A549 (cell line): ENCODE measurements at regions of chr19 and their contacts with region 1.

Region 1: GRCh38 chr19:10251792-10252694 is at the start of gene MRPL4:
- DNase-seq: peak; percentile 91 to 97
- ATAC-seq: peak; percentile 96 to 97
- H3K4me3 ChIP-seq: peak within 1 kb of the TSS; percentile 86
- H3K27ac ChIP-seq: peak within 1 kb of the TSS; percentile 95 to 98
- H3K4me1 ChIP-seq: no peaks in the 10 kb centered on the region
- CTCF ChIP-seq: no peak
- EP300 ChIP-seq: no peak
- POLR2A ChIP-seq: peak; percentile 52
- RAD21 ChIP-seq: no peak
- polyA plus RNA-seq, gene MRPL4: 25.9 and 26.4 TPM in 2 replicates

Region 2: DNA sequence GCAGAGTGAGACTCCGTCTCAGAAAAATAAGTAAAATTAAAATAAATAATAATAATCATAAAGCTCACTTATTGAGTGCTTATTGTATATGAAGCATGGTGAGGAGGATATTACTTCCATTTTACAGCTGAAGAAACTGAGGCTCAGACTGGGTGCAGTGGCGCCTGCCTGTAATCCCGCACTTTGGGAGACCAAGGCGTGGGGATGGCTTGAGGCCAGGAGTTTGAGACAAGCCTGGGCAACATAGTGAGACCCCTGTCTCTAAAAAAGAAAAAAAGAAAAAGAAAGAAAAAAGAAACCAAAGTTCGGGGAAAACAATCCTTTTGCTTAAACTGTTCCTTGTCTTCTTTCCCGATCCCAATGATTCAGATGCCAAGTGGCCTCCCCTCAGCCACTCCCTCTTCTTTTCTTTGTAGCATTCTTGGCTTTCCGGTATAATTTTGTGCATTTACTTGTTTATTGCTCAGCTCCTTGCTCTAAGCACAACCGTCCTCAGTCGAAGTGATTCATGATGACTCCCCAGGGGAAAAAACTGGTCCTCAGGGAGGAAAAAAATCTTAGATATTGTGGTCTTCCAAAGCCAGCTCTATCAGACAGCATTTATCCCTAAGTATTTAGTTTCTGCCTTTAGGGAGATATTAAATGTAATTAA is 131.4 kb before region 1 on chr19:
- CTCF ChIA-PET with region 1: interaction called, 13 read pairs
- POLR2A ChIA-PET with region 1: no interaction called
- DNase-seq: no peak
- ATAC-seq: no peak
- H3K4me3 ChIP-seq: no peak overlapping the region
- H3K27ac ChIP-seq: peak overlapping the region in 1 of 2 experiments; percentile 36; a peak in 2 of 6 replicates
- H3K4me1 ChIP-seq: 0 out of 3 replicates have a peak, but pooled peaks cover 5% of the 10 kb centered on the region
- CTCF ChIP-seq: no peak
- EP300 ChIP-seq: no peak
- POLR2A ChIP-seq: no peak
- RAD21 ChIP-seq: no peak

Region 3: DNA sequence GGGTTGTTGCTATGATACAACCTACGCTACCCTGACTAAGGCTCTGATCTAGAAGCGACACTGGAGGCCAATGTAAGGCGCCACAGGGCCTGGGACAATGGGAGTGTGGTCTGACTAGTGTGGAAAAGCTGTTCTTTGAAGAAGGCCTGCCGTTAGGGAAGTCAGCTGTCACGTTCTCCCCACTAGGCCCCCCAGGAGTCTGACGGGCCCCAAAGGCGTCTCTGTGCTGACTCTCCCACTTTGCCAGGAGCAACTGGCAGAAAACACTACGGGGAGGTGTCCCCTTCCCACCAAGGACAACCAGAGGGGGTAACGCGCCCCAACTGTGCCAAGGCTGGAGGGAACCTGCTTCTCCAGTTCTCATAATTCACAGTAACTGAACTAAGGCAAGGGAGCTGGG is 107.0 kb before region 1 on chr19:
- CTCF ChIA-PET with region 1: no interaction called
- POLR2A ChIA-PET with region 1: no interaction called
- DNase-seq: no peak
- ATAC-seq: no peak
- H3K4me3 ChIP-seq: no peak overlapping the region
- H3K27ac ChIP-seq: no peak overlapping the region
- H3K4me1 ChIP-seq: no peaks in the 10 kb centered on the region
- CTCF ChIP-seq: no peak
- EP300 ChIP-seq: no peak
- POLR2A ChIP-seq: no peak
- RAD21 ChIP-seq: no peak

Region 4: GRCh38 chr19:10173257-10173926 is 78.7 kb before region 1 on chr19:
- CTCF ChIA-PET with region 1: no interaction called
- POLR2A ChIA-PET with region 1: no interaction called
- DNase-seq: peak in 1 of 2 experiments; percentile 37
- ATAC-seq: no peak
- H3K4me3 ChIP-seq: no peak overlapping the region
- H3K27ac ChIP-seq: no peak overlapping the region
- H3K4me1 ChIP-seq: 0 out of 3 replicates have a peak, but pooled peaks cover 7% of the 10 kb centered on the region
- CTCF ChIP-seq: no peak
- EP300 ChIP-seq: no peak
- POLR2A ChIP-seq: no peak
- RAD21 ChIP-seq: no peak

Region 5: DNA sequence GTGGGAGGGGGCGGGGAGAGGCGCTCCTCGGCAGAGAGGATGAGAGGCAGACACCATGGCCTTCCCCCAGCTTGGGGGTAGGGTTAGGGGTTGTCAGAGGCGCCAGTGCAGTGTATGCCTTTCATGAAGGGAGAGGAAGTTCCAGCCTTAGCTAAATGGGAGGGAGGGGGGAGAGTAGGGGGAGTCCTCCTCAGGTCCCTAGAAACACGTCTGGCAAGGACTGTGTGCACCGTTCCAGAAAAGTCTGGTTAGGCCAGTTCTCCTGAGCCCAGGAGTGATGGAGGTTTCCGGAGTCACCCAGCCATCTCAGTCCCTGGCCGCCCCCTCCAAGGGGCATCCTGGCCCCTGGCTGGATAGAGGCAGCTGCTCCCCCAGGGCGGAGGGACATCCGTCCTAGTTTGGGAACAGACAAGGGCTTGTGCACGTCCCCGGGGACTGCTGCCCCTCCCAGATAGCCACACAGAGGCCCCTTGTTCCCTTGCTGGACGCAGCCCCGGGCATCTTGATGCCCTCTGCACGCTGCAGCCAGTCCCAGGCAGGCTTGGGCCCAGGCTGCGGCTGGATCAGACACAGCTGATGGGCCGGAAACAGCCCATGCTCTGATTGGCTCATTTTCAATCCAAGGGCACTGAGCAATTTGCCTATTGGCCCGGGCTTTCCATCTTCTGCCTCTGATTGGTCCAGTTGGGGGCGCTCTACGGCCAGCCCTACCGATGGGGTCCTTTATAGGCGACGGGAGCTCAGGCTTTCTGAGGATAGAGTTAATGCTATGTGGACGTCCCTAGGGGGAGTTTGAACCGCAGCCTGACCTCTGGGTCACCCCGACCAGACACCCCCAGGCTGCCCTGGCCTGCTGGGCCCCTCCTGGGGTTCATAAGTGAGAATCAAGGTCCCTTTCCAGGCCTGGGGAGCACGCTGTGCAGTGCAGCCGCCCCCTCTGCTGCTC is 24.7 kb before region 1 on chr19:
- CTCF ChIA-PET with region 1: interaction called, 12 read pairs
- POLR2A ChIA-PET with region 1: interaction called, 3 read pairs
- DNase-seq: no peak
- ATAC-seq: no peak
- H3K4me3 ChIP-seq: no peak overlapping the region
- H3K27ac ChIP-seq: no peak overlapping the region
- H3K4me1 ChIP-seq: peaks cover 5% of the 10 kb centered on the region; the same call in 1 of the 3 replicates
- CTCF ChIP-seq: no peak
- EP300 ChIP-seq: no peak
- POLR2A ChIP-seq: no peak
- RAD21 ChIP-seq: no peak

Region 6: DNA sequence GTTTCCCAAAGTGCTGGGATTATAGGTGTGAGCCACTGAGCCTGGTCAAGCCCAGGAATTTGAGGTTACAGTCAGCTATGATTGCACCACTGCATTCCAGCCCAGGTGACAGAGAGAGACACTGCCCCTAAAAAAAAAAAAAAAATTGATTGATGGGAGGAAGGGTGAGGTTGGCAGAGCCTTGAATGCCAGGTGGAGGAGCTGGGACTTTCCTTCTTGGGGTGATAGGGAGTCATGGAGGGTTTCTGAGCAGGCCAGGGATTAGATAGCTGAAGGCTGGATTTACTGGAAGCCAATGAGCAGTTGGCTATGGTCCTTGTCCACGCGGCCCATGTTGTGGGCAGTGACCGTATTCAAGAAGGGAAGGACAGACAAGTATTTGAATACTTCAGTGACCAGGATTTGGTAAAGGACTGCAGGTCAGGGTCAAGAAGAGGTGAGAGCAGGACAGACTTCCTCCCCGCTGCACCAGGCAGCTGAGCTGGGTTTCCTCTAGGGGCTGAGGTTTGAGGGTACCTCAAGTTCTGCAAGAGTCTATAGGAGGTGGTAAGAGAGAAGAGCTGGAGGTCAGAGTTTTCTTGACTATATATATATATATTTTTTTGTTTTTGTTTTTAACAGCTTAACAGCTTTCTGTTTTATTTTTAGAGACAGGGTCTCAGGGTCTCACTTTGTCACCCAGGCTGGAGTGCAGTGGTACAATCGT is 27.8 kb after region 1 on chr19:
- CTCF ChIA-PET with region 1: no interaction called
- POLR2A ChIA-PET with region 1: no interaction called
- DNase-seq: no peak
- ATAC-seq: no peak
- H3K4me3 ChIP-seq: no peak overlapping the region
- H3K27ac ChIP-seq: no peak overlapping the region
- H3K4me1 ChIP-seq: peaks cover 8% of the 10 kb centered on the region; the same call in 1 of the 3 replicates
- CTCF ChIP-seq: no peak
- EP300 ChIP-seq: no peak
- POLR2A ChIP-seq: no peak
- RAD21 ChIP-seq: no peak